Mammary epithelial cell (primary cell): ENCODE measurements at regions of chr7 and their contacts with region 1.

Region 1: GRCh38 chr7:141490474-141490873 is 60.7 kb upstream of the AGK start:
- DNase-seq: no peak
- H3K4me3 ChIP-seq: no peak overlapping the region
- H3K27ac ChIP-seq: no peak overlapping the region
- H3K4me1 ChIP-seq: no peaks in the 10 kb centered on the region
- H3K27me3 ChIP-seq: peaks cover 1% of the 10 kb centered on the region
- CTCF ChIP-seq: no peak

Region 2: DNA sequence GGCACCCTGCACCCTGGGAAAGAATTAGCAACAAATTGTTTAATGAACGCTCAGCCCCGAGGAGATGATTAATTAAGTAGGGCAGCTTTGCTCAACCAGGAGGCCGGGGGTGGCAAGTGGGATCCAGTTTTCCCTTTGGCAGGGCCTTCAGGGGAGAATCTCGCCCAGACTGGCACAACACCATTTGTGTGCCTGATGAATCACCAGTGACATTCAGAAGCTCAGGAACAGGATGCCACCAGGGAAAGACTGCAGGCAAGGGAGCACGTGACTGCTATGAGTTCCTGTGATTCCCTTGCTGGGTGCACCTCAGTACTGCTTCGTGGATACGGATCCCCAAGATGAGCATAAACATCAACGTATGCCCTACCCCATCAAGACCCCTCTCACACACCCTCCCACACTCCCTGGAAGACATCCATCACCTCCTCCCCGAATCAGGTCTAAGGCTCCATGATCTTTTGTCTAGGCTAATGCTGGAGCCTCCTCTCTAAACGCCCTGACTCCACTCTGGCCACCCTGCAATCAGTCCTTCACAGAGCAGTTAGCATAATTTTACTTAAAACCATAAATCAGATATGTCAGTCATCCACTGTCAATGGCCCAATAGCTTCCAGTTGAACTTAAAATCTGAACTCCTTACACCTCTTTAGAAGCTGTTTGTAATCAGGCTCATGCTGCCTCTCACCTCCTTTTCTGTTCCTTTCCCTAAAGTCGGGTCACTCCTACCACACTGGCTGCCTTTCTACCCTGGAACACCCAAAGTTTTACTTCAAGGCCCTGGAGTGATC is 48.4 kb before region 1 on chr7:
- CTCF ChIA-PET with region 1: no interaction called
- dilution Hi-C with region 1: loop called (anchors 10 kb)
- in situ Hi-C with region 1: no loop called
- intact Hi-C with region 1: no loop called
- DNase-seq: peak; percentile 9
- H3K4me3 ChIP-seq: no peak overlapping the region
- H3K27ac ChIP-seq: no peak overlapping the region
- H3K4me1 ChIP-seq: no peaks in the 10 kb centered on the region
- H3K27me3 ChIP-seq: no peaks in the 10 kb centered on the region
- CTCF ChIP-seq: no peak